ENCODE measurements at regions of chr14 and their contacts with region 1.

Region 1: GRCh38 chr14:49483268-49483667 is 102.9 kb downstream of the RPS29 start:
- DNase-seq: no peak
- H3K4me3 ChIP-seq: no peak overlapping the region
- H3K27me3 ChIP-seq: no peaks in the 10 kb centered on the region
- CTCF ChIP-seq: no peak

Region 2: GRCh38 chr14:48452437-48452995 is 1030.8 kb before region 1 on chr14:
- CTCF ChIA-PET with region 1: no interaction called
- POLR2A ChIA-PET with region 1: no interaction called
- DNase-seq: no peak
- H3K4me3 ChIP-seq: no peak overlapping the region
- H3K27me3 ChIP-seq: no peaks in the 10 kb centered on the region
- CTCF ChIP-seq: no peak

Region 3: GRCh38 chr14:49497725-49498348 is 14.6 kb after region 1 on chr14:
- CTCF ChIA-PET with region 1: interaction called, 12 read pairs
- POLR2A ChIA-PET with region 1: no interaction called
- DNase-seq: no peak
- H3K4me3 ChIP-seq: no peak overlapping the region
- H3K27me3 ChIP-seq: peaks cover 5% of the 10 kb centered on the region
- CTCF ChIP-seq: peak; percentile 84